OCI-LY7 (cell line): ENCODE measurements at regions of chr9 and their contacts with region 1.

Region 1: GRCh38 chr9:71819115-71819739 is 50.9 kb upstream of the CEMIP2 start:
- DNase-seq: peak; percentile 54
- H3K4me3 ChIP-seq: no peak overlapping the region
- H3K27ac ChIP-seq: no peak overlapping the region
- H3K4me1 ChIP-seq: no peaks in the 10 kb centered on the region
- CTCF ChIP-seq: peak; percentile 97

Region 2: DNA sequence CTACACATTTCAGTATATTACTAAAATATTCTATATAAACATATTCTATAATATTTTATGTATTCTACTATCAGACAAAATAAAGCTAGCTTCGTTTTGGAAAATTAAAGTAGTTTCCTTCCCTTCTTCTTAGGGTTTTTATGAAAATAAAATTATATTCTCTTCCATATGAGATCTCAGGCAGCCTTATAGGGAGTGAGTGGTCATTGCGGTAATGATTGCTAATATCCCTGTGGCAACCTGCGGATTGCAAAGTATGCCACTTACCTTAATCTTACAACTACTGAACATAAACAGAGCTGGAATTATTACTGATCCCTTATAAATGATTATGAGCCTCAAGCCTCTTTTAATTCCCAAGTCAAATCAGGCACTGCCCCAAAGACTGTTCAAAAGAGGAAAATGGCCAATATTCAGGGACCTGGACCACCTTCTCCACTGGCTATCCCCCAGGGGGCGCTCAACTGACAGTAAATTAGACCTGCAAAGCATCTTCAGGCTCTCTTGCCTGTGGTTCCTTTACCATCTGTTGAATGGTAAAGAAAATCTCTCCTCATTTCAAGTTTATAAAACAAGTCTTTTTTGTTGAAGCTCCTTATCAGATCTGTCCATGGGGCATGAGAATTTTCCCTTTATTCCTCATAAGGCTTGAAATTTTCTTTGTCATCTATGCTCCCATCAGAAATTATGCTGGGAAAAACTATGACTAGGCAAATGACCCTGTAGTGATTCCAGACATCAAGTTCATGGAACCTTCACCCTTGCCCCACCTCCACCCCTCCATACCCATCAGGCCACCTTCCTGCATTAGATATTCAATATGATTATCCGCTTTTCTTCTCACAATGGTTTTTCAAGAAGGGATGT is 214.8 kb before region 1 on chr9:
- CTCF ChIA-PET with region 1: no interaction called
- POLR2A ChIA-PET with region 1: no interaction called
- intact Hi-C with region 1: loop called (anchors 1 kb)
- DNase-seq: peak; percentile 69
- H3K4me3 ChIP-seq: no peak overlapping the region
- H3K27ac ChIP-seq: no peak overlapping the region
- H3K4me1 ChIP-seq: no peaks in the 10 kb centered on the region
- CTCF ChIP-seq: peak; percentile 91

Region 3: GRCh38 chr9:71628247-71628646 is 191.0 kb before region 1 on chr9:
- CTCF ChIA-PET with region 1: no interaction called
- POLR2A ChIA-PET with region 1: no interaction called
- intact Hi-C with region 1: loop called (anchors 2 kb)
- DNase-seq: no peak
- H3K4me3 ChIP-seq: no peak overlapping the region
- H3K27ac ChIP-seq: no peak overlapping the region
- H3K4me1 ChIP-seq: no peaks in the 10 kb centered on the region
- CTCF ChIP-seq: peak; percentile 65

Region 4: DNA sequence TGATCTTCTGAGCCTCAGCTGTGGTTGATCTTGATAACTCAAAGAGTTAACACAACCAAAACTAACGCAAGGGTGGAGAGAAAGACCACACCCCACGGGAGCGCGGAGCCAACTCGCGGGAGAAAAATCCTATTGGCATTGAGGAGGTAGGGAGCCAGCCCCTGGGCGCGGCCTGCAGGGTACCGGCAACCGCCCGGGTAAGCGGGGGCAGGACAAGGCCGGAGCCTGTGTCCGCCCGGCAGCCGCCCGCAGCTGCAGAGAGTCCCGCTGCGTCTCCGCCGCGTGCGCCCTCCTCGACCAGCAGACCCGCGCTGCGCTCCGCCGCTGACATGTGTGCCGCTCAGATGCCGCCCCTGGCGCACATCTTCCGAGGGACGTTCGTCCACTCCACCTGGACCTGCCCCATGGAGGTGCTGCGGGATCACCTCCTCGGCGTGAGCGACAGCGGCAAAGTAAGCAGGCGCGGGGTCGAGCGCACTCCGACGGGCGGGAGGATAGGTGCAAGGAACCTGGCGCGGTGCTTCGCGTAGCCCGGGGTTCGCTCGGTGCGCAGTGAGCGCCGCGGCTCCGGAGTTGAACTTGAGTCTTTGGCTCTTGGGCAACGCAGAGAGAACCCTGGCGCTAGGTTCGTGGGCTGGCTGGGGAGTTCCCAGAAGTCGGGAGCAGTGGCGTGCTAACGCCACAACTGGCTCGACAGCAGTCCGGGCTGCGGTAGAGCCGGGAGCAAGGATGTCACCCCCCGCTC is 330.2 kb after region 1 on chr9 and contains the start of gene GDA:
- CTCF ChIA-PET with region 1: no interaction called
- POLR2A ChIA-PET with region 1: no interaction called
- intact Hi-C with region 1: no loop called
- DNase-seq: no peak
- H3K4me3 ChIP-seq: no peak within 1 kb of the TSS
- H3K27ac ChIP-seq: no peak within 1 kb of the TSS
- H3K4me1 ChIP-seq: no peaks in the 10 kb centered on the region
- CTCF ChIP-seq: no peak
- total RNA-seq, gene GDA: not detected in 2 replicates